Heart left ventricle (tissue), 16 donors: ENCODE measurements at regions of chr9 and their contacts with region 1.

Region 1: GRCh38 chr9:128504485-128505413 is at the start of gene GLE1:
- DNase-seq: peak; percentile 95 to 99 (median 96)
- ATAC-seq: peak; percentile 99 to 100 (median 100)
- H3K4me3 ChIP-seq: peak within 1 kb of the TSS; percentile 45 to 99 (median 78)
- H3K27ac ChIP-seq: peak within 1 kb of the TSS; percentile 20 to 90 (median 80)
- H3K4me1 ChIP-seq: peaks cover 0 to 24% (median 19%) of the 10 kb centered on the region in 12 donors
- H3K27me3 ChIP-seq: no peaks in the 10 kb centered on the region
- CTCF ChIP-seq: no peak
- POLR2A ChIP-seq: peak in 1 of 2 donors; percentile 80
- total RNA-seq, gene GLE1: 17.2 to 23.5 (median 19.9) TPM

Region 2: GRCh38 chr9:128412120-128412790 is 92.5 kb before region 1 on chr9:
- intact Hi-C with region 1: no loop called
- DNase-seq: peak in 2 of 5 donors; percentile 26 to 35
- ATAC-seq: peak in 3 of 4 donors; percentile 28 to 65 (median 49)
- H3K4me3 ChIP-seq: no peak overlapping the region
- H3K27ac ChIP-seq: no peak overlapping the region
- H3K4me1 ChIP-seq: peaks cover 0 to 13% (median 0%) of the 10 kb centered on the region in 12 donors
- H3K27me3 ChIP-seq: peaks cover 0 to 60% (median 15%) of the 10 kb centered on the region in 9 donors
- CTCF ChIP-seq: peak; percentile 33 to 68 (median 57)
- POLR2A ChIP-seq: no peak

Region 3: GRCh38 chr9:128552153-128552743 is 47.5 kb after region 1 on chr9 and contains the start of gene SPTAN1:
- intact Hi-C with region 1: loop called in 3 of 10 experiments (anchors 2 to 5 kb)
- DNase-seq: peak; percentile 92 to 96 (median 93)
- ATAC-seq: peak; percentile 64 to 89 (median 84)
- H3K4me3 ChIP-seq: peak within 1 kb of the TSS; percentile 77 to 98 (median 95)
- H3K27ac ChIP-seq: peak within 1 kb of the TSS; percentile 94 to 100 (median 98)
- H3K4me1 ChIP-seq: peaks cover 16 to 71% (median 57%) of the 10 kb centered on the region in 12 donors
- H3K27me3 ChIP-seq: no peaks in the 10 kb centered on the region
- CTCF ChIP-seq: no peak
- POLR2A ChIP-seq: peak; percentile 83 to 99
- total RNA-seq, gene SPTAN1: 218 to 472 (median 285) TPM